GM13977 (cell line): ENCODE measurements at regions of chr3 and their contacts with region 1.

Region 1: DNA sequence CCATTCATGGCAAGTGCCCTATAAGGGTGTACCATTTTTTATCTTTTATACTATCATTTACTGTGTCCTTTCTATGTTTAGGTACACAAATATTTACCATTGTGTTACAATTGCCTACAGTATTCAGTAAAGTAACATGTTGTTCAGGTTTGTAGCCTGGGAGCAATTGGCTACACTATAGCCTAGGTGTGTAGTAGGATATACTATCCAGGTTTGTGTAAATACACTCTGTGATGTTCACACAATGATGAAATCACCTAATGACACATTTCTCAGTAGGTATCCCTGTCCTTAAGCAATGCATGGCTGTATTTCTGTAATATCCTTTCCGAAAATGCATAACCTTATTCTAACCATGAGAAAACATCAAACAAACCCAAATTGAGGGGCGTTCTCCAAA is 17.9 kb upstream of the CNOT10 start:
- DNase-seq: no peak
- CTCF ChIP-seq: no peak

Region 2: DNA sequence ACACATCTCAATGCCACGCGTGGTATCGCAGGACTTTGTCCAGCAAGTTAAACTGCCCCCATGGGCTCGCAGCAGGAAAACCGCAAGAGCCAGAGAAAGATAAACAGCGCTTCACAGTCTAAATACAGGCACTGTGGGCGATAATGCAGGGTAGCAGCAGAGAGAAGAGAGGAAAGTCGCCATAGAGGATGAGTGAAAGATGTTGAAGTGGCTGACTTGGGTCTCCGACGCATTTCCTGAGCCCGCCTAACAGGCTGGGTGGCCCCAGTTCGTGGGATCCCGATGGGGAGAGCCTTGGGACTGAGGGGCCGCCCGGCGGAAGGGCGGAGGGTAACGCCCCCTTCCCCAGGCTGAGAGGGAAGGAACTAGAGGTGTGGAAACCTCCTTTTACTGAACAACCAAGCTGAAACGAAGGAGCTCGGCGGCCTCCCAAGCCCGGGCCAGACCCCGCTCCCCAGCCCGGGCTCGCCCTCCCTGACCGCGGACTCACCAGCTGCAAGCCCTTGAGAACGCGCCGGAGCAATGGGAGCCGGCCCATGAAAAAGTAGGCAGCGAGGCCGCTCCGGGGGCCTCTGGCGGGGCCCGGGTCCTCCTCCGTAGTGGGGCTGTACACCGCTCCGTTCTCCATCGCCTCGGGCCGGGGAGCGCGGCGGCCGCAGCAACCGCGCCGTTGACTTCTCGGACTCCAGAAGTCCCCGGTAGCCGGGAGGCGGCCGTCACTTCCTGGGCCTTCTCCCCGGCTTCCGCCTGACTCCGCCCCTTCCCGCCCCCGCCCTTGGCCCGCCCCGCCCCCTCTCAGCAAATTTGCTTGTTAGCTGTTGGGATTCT is 164.8 kb before region 1 on chr3 and contains the start of gene CMTM6:
- in situ Hi-C with region 1: loop called (anchors 10 kb)
- DNase-seq: peak; percentile 92
- CTCF ChIP-seq: no peak